ENCODE measurements at regions of chrX and their contacts with region 1.

Region 1: DNA sequence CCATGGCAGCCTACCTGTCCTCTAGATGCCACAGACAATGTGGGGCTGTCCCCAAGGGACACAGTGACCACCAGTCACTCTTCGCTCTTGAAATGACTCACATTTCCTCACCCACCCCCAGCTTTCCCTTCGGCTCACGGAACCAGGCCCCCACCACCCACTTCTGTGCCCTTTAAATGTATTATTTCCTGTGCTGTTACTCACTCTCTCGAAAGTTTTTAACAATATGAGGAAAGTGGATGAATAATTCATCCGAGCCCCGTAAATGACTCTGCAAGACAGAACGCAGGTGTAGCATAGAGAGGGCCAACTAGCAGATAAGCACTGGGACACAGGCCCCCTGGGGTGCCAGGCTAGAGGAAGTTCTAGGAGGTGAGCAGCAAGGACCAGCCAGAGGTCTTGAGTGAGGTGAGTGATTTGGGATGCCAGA is 179.5 kb upstream of the TBL1X start:
- DNase-seq: peak; percentile 83
- H3K4me3 Mint-ChIP-seq: no peak overlapping the region
- H3K27ac Mint-ChIP-seq: peak overlapping the region; percentile 61
- H3K4me1 Mint-ChIP-seq: peaks cover 19% of the 10 kb centered on the region
- H3K27me3 Mint-ChIP-seq: no peaks in the 10 kb centered on the region

Region 2: GRCh38 chrX:9163214-9163681 is 122.1 kb before region 1 on chrX:
- CTCF ChIA-PET with region 1: no interaction called
- POLR2A ChIA-PET with region 1: no interaction called
- intact Hi-C with region 1: loop called (anchors 10 kb)
- DNase-seq: no peak
- H3K4me3 Mint-ChIP-seq: no peak overlapping the region
- H3K27ac Mint-ChIP-seq: peak overlapping the region; percentile 33
- H3K4me1 Mint-ChIP-seq: peaks cover 44% of the 10 kb centered on the region
- H3K27me3 Mint-ChIP-seq: no peaks in the 10 kb centered on the region

Region 3: GRCh38 chrX:9258421-9259104 is 26.8 kb before region 1 on chrX:
- CTCF ChIA-PET with region 1: no interaction called
- POLR2A ChIA-PET with region 1: no interaction called
- intact Hi-C with region 1: loop called (anchors 1 kb)
- DNase-seq: no peak
- H3K4me3 Mint-ChIP-seq: no peak overlapping the region
- H3K27ac Mint-ChIP-seq: no peak overlapping the region
- H3K4me1 Mint-ChIP-seq: peaks cover 25% of the 10 kb centered on the region
- H3K27me3 Mint-ChIP-seq: no peaks in the 10 kb centered on the region

Region 4: DNA sequence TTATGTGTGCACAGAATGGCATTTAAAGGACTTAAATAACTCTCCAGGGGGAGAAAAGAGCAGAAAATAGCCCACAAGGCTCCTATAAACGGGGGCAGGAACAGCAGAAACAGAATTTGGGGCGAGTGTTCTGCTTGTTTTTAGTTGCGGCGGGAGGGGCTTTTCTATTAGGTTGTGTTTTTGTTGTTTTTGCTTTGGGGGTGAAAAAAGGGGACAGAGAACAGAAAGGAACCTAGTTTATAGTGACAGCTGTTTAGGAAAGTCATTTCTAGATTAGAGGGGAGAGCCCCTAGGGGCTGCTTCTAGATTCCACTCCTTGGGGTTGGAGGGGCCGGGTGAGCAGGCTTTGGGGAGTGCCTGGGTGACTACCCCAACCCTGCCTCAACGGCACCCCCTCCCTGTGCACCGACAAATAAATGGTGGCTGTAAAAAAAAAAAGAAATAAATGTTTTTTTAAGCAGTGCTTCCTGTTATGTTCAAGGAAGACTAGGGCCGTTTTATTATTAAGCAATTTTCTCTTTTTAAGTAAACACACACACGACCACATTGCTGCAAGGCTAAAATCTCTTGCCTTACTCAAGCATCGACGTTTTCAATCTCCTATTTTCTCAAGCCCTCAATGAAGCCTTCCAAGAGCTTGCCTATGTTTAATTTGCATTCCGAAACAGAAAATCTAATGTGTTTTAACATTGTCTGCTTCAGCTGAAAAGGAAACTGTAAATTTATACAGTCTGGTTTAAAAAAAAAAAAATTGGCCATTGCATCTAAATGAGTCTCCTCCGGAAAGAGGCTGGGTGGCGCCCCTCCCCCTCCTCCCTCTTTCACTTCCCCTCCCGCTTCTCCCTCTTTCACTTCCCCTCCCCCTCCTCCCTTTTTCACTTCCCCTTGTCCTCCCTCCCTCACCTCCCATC is 56.2 kb after region 1 on chrX:
- CTCF ChIA-PET with region 1: no interaction called
- POLR2A ChIA-PET with region 1: no interaction called
- intact Hi-C with region 1: loop called (anchors 1 kb)
- DNase-seq: peak; percentile 76
- H3K4me3 Mint-ChIP-seq: peak overlapping the region; percentile 30
- H3K27ac Mint-ChIP-seq: peak overlapping the region; percentile 84
- H3K4me1 Mint-ChIP-seq: peaks cover 30% of the 10 kb centered on the region
- H3K27me3 Mint-ChIP-seq: no peaks in the 10 kb centered on the region

Region 5: DNA sequence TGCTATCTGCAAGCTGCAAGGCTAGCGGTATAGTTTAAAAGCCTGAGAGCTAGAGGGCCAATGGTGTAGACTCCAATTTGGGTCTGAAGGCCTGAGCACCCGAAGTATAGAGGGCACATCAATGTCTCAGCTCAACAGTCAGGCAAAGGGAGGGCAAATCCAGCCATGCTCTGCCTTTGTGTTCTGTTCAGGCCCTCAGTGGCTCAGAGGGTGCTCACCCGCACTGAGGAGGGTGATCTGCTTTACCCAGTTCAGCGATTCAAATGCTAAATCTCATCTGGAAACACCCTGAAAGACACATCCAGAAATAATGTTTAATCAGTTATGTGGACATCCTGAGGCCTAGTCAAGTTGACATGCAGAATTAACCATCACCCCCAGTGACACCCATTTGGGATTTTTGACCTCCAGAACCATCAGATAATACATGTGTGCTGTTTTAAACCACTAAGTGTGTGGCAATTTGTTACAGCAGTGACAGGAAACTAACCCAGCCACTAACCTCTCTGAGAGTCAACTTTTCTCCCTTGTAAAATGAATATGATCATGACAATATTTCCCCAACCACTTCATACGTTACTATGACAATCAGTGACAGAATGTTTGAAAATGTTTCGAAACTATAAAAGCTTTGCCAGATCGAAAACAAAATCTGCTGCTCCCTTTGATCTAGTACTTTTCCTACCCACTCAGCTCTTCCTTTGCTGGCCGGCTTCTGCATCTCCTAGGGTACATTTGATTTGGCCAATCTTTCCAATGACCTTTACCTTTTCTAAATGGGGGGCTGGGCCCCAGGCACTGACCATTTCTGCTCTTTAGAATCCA is 171.1 kb after region 1 on chrX:
- CTCF ChIA-PET with region 1: no interaction called
- POLR2A ChIA-PET with region 1: no interaction called
- intact Hi-C with region 1: loop called (anchors 1 kb)
- DNase-seq: peak; percentile 44
- H3K4me3 Mint-ChIP-seq: peak overlapping the region; percentile 41
- H3K27ac Mint-ChIP-seq: peak overlapping the region; percentile 80
- H3K4me1 Mint-ChIP-seq: peaks cover 31% of the 10 kb centered on the region
- H3K27me3 Mint-ChIP-seq: no peaks in the 10 kb centered on the region

Region 6: DNA sequence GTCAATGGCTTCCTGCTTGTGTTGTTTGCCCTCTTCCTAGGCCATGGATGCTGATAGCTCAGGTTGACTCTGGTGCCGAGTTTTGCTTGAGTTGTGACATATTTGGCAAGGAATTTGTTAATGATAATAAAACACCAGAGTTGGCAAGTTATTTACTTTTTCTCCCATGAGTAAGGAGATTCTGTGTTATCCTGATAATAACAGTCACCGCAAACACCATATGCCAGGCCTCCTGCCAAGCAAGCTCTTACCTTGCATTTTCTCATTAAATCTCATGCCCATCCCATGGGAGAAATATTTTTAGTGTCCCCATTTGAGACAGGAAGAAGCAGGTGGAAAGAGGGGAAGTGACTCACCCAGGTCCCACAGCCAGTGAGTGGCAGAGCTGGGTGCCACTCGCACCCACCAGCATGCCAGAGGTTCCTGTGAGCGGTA is 804.0 kb after region 1 on chrX:
- CTCF ChIA-PET with region 1: no interaction called
- POLR2A ChIA-PET with region 1: no interaction called
- intact Hi-C with region 1: loop called (anchors 5 kb)
- DNase-seq: no peak
- H3K4me3 Mint-ChIP-seq: no peak overlapping the region
- H3K27ac Mint-ChIP-seq: no peak overlapping the region
- H3K4me1 Mint-ChIP-seq: peaks cover 29% of the 10 kb centered on the region
- H3K27me3 Mint-ChIP-seq: no peaks in the 10 kb centered on the region

Measured in activated CD4-positive, alpha-beta memory T cell treated with anti-CD3 and anti-CD28 coated beads for 36 hours (primary cell).